Naive thymus-derived CD4-positive, alpha-beta T cell (primary cell): ENCODE measurements at regions of chr12 and their contacts with region 1.

Region 1: GRCh38 chr12:68364893-68365725 is 32.9 kb upstream of the MDM1 start:
- DNase-seq: peak; percentile 52 to 85 (median 77)
- ATAC-seq: peak; percentile 86
- H3K4me3 ChIP-seq: peak overlapping the region; percentile 57
- H3K4me3 Mint-ChIP-seq: peak overlapping the region; percentile 77 to 93 (median 87)
- H3K27ac ChIP-seq: peak overlapping the region; percentile 80
- H3K27ac Mint-ChIP-seq: peak overlapping the region; percentile 86 to 97 (median 93)
- H3K4me1 ChIP-seq: peaks cover 40 to 50% of the 10 kb centered on the region in 2 donors
- H3K4me1 Mint-ChIP-seq: peaks cover 56 to 84% (median 69%) of the 10 kb centered on the region in 7 donors
- H3K27me3 ChIP-seq: no peaks in the 10 kb centered on the region
- H3K27me3 Mint-ChIP-seq: no peaks in the 10 kb centered on the region

Region 2: GRCh38 chr12:68040450-68041075 is 324.5 kb before region 1 on chr12:
- CTCF ChIA-PET with region 1: no interaction called
- POLR2A ChIA-PET with region 1: no interaction called
- intact Hi-C with region 1: no loop called
- DNase-seq: peak; percentile 19 to 72 (median 61)
- ATAC-seq: peak; percentile 84
- H3K4me3 ChIP-seq: no peak overlapping the region
- H3K4me3 Mint-ChIP-seq: peak overlapping the region in 2 of 10 donors; percentile 13 to 33
- H3K27ac ChIP-seq: no peak overlapping the region
- H3K27ac Mint-ChIP-seq: no peak overlapping the region
- H3K4me1 ChIP-seq: peaks cover 0 to 5% of the 10 kb centered on the region in 2 donors
- H3K4me1 Mint-ChIP-seq: peaks cover 0 to 24% (median 5%) of the 10 kb centered on the region in 7 donors
- H3K27me3 ChIP-seq: no peaks in the 10 kb centered on the region
- H3K27me3 Mint-ChIP-seq: no peaks in the 10 kb centered on the region

Region 3: GRCh38 chr12:68451261-68452077 is 86.4 kb after region 1 on chr12:
- CTCF ChIA-PET with region 1: no interaction called
- POLR2A ChIA-PET with region 1: interaction called, 3 read pairs
- intact Hi-C with region 1: loop called (anchors 1 to 2 kb)
- DNase-seq: peak in 7 of 9 donors; percentile 8 to 59 (median 29)
- ATAC-seq: peak; percentile 68
- H3K4me3 ChIP-seq: peak overlapping the region; percentile 28
- H3K4me3 Mint-ChIP-seq: peak overlapping the region; percentile 61 to 85 (median 72)
- H3K27ac ChIP-seq: peak overlapping the region; percentile 48
- H3K27ac Mint-ChIP-seq: peak overlapping the region; percentile 49 to 97 (median 76)
- H3K4me1 ChIP-seq: peaks cover 64 to 68% of the 10 kb centered on the region in 2 donors
- H3K4me1 Mint-ChIP-seq: peaks cover 72 to 100% (median 95%) of the 10 kb centered on the region in 7 donors
- H3K27me3 ChIP-seq: no peaks in the 10 kb centered on the region
- H3K27me3 Mint-ChIP-seq: no peaks in the 10 kb centered on the region

Region 4: GRCh38 chr12:68491204-68491960 is 126.3 kb after region 1 on chr12:
- CTCF ChIA-PET with region 1: no interaction called
- POLR2A ChIA-PET with region 1: interaction called, 4 read pairs
- intact Hi-C with region 1: loop called in 1 of 2 experiments (anchors 5 kb)
- DNase-seq: no peak
- ATAC-seq: no peak
- H3K4me3 ChIP-seq: no peak overlapping the region
- H3K4me3 Mint-ChIP-seq: no peak overlapping the region
- H3K27ac ChIP-seq: no peak overlapping the region
- H3K27ac Mint-ChIP-seq: no peak overlapping the region
- H3K4me1 ChIP-seq: no peaks in the 10 kb centered on the region
- H3K4me1 Mint-ChIP-seq: peaks cover 6 to 20% (median 12%) of the 10 kb centered on the region in 7 donors
- H3K27me3 ChIP-seq: no peaks in the 10 kb centered on the region
- H3K27me3 Mint-ChIP-seq: no peaks in the 10 kb centered on the region

Region 5: GRCh38 chr12:68641138-68641537 is 276.0 kb after region 1 on chr12:
- CTCF ChIA-PET with region 1: no interaction called
- POLR2A ChIA-PET with region 1: interaction called, 3 read pairs
- intact Hi-C with region 1: loop called in 1 of 2 experiments (anchors 2 kb)
- DNase-seq: peak in 8 of 9 donors; percentile 15 to 45 (median 29)
- ATAC-seq: peak; percentile 73
- H3K4me3 ChIP-seq: no peak overlapping the region
- H3K4me3 Mint-ChIP-seq: peak overlapping the region; percentile 17 to 81 (median 74)
- H3K27ac ChIP-seq: peak overlapping the region; percentile 57
- H3K27ac Mint-ChIP-seq: peak overlapping the region; percentile 39 to 90 (median 83)
- H3K4me1 ChIP-seq: peaks cover 65% of the 10 kb centered on the region in 2 donors
- H3K4me1 Mint-ChIP-seq: peaks cover 47 to 96% (median 86%) of the 10 kb centered on the region in 7 donors
- H3K27me3 ChIP-seq: no peaks in the 10 kb centered on the region
- H3K27me3 Mint-ChIP-seq: no peaks in the 10 kb centered on the region

Region 6: DNA sequence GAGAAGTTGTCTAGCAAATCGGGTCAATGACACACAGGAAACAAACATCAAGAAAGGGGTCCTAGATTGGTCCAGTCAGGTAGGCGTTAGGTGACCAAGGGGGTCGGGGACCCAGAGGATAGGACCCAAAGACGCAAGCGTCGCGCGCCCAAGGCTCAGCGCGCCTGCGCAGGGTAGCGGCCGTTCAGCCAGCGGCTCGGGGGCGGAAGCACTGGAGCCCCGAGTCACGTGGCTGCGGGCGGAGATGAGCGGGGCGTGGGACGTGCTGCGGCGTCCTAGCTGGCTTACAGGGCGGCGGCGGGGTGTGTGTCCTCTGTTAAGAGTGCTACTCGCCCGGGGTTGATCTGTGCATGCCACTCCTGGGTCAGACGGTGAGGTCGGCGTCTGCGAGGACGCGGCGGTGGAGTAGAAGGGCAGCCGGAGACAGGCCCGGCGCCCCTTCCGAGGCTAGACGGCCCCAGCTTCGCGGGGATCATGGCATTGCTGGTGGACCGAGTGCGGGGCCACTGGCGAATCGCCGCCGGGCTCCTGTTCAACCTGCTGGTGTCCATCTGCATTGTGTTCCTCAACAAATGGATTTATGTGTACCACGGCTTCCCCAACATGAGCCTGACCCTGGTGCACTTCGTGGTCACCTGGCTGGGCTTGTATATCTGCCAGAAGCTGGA is 380.9 kb after region 1 on chr12 and contains the start of gene SLC35E3:
- CTCF ChIA-PET with region 1: no interaction called
- POLR2A ChIA-PET with region 1: no interaction called
- intact Hi-C with region 1: loop called in 1 of 2 experiments (anchors 2 kb)
- DNase-seq: peak; percentile 81 to 91 (median 86)
- ATAC-seq: peak; percentile 99
- H3K4me3 ChIP-seq: peak within 1 kb of the TSS; percentile 98
- H3K4me3 Mint-ChIP-seq: peak within 1 kb of the TSS; percentile 91 to 99 (median 96)
- H3K27ac ChIP-seq: peak within 1 kb of the TSS; percentile 79
- H3K27ac Mint-ChIP-seq: peak within 1 kb of the TSS; percentile 92 to 97 (median 96)
- H3K4me1 ChIP-seq: peaks cover 7 to 16% of the 10 kb centered on the region in 2 donors
- H3K4me1 Mint-ChIP-seq: peaks cover 27 to 64% (median 54%) of the 10 kb centered on the region in 7 donors
- H3K27me3 ChIP-seq: no peaks in the 10 kb centered on the region
- H3K27me3 Mint-ChIP-seq: no peaks in the 10 kb centered on the region
- total RNA-seq, gene SLC35E3: 9.0 to 12.1 (median 9.2) TPM